A673 (cell line): ENCODE measurements at regions of chr3 and their contacts with region 1.

Region 1: GRCh38 chr3:160003520-160004128 is 15.0 kb downstream of the IL12A start:
- DNase-seq: peak; percentile 65
- H3K4me3 ChIP-seq: no peak overlapping the region
- H3K27ac ChIP-seq: no peak overlapping the region
- H3K4me1 ChIP-seq: no peaks in the 10 kb centered on the region
- H3K27me3 ChIP-seq: no peaks in the 10 kb centered on the region
- CTCF ChIP-seq: peak; percentile 57

Region 2: DNA sequence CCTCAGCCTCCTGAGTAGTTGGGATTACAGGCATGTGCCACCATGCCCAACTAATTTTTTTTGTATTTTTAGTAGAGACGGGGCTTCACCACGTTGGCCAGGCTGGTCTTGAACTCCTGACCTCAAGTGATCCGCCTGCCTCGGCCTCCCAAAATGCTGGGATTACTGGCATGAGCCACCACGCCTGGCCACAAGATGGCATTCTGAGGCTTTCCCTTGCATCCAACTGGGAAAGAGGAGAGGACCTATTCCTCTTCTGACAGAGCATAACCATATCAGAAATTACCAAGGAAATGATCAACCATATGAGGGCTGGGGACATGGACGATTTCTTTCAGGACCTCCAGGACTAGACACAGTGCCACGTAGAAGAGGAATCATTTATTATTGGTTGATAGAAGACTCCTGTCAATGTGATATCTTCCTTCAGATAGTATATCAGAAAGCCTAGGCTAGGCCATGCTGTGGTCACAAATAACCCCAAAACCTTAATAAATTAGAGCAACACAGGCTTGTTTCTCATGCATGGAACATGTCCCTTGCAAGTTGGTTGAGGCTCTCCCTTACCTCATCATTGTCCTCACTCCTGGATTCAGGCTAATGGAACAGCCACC is 387.3 kb before region 1 on chr3:
- CTCF ChIA-PET with region 1: no interaction called
- POLR2A ChIA-PET with region 1: no interaction called
- intact Hi-C with region 1: loop called (anchors 10 kb)
- DNase-seq: peak; percentile 37
- H3K4me3 ChIP-seq: no peak overlapping the region
- H3K27ac ChIP-seq: no peak overlapping the region
- H3K4me1 ChIP-seq: no peaks in the 10 kb centered on the region
- H3K27me3 ChIP-seq: peaks cover 4% of the 10 kb centered on the region
- CTCF ChIP-seq: peak; percentile 51

Region 3: GRCh38 chr3:159828542-159828943 is 175.1 kb before region 1 on chr3:
- CTCF ChIA-PET with region 1: interaction called, 14 read pairs
- POLR2A ChIA-PET with region 1: no interaction called
- intact Hi-C with region 1: loop called (anchors 2 kb)
- DNase-seq: peak; percentile 78
- H3K4me3 ChIP-seq: no peak overlapping the region
- H3K27ac ChIP-seq: peak overlapping the region; percentile 51
- H3K4me1 ChIP-seq: peaks cover 23% of the 10 kb centered on the region
- H3K27me3 ChIP-seq: no peaks in the 10 kb centered on the region
- CTCF ChIP-seq: peak; percentile 71

Region 4: GRCh38 chr3:159884661-159885402 is 118.8 kb before region 1 on chr3:
- CTCF ChIA-PET with region 1: interaction called, 29 read pairs
- POLR2A ChIA-PET with region 1: no interaction called
- intact Hi-C with region 1: loop called (anchors 2 kb)
- DNase-seq: peak; percentile 64
- H3K4me3 ChIP-seq: no peak overlapping the region
- H3K27ac ChIP-seq: no peak overlapping the region
- H3K4me1 ChIP-seq: peaks cover 26% of the 10 kb centered on the region
- H3K27me3 ChIP-seq: peaks cover 12% of the 10 kb centered on the region
- CTCF ChIP-seq: peak; percentile 63